ENCODE measurements at regions of chr11 and their contacts with region 1.

Region 1: DNA sequence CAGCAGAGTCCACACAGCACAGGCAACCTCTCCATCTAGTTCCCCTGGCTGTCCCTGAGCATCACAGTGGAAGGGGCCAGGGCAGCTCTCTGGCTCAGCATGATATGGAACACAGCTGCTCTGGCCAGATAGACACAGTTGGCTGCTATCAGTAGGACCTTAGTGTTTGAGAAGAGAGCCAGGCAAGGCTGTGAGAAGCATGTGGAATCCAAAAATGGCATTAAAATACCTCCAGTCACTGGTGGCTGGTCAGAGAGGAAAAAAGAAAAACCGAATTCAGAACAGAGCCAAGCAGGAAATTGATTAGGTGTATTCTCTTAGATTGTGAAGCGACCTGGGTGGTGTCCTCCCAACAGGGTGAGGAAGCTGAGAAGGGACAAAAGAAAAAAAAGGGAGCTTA is 27.9 kb downstream of the SERPINH1 start:
- DNase-seq: no peak
- H3K4me3 ChIP-seq: no peak overlapping the region
- H3K27ac ChIP-seq: no peak overlapping the region
- H3K4me1 ChIP-seq: no peaks in the 10 kb centered on the region
- H3K27me3 ChIP-seq: no peaks in the 10 kb centered on the region
- CTCF ChIP-seq: no peak
- EP300 ChIP-seq: no peak
- POLR2A ChIP-seq: no peak
- RAD21 ChIP-seq: no peak

Region 2: GRCh38 chr11:75577207-75577606 is 12.7 kb before region 1 on chr11:
- CTCF ChIA-PET with region 1: interaction called, 29 read pairs
- POLR2A ChIA-PET with region 1: interaction called, 1,120 read pairs
- DNase-seq: peak in 1 of 2 experiments; percentile 88
- H3K4me3 ChIP-seq: no peak overlapping the region
- H3K27ac ChIP-seq: no peak overlapping the region
- H3K4me1 ChIP-seq: peaks cover 0 to 5% (median 2%) of the 10 kb centered on the region in 4 experiments; a peak in 4 of 7 replicates
- H3K27me3 ChIP-seq: no peaks in the 10 kb centered on the region
- CTCF ChIP-seq: peak; percentile 61 to 80 (median 61)
- EP300 ChIP-seq: no peak
- POLR2A ChIP-seq: no peak
- RAD21 ChIP-seq: peak in 1 of 2 experiments; percentile 40; a peak in 1 of 4 replicates

Region 3: DNA sequence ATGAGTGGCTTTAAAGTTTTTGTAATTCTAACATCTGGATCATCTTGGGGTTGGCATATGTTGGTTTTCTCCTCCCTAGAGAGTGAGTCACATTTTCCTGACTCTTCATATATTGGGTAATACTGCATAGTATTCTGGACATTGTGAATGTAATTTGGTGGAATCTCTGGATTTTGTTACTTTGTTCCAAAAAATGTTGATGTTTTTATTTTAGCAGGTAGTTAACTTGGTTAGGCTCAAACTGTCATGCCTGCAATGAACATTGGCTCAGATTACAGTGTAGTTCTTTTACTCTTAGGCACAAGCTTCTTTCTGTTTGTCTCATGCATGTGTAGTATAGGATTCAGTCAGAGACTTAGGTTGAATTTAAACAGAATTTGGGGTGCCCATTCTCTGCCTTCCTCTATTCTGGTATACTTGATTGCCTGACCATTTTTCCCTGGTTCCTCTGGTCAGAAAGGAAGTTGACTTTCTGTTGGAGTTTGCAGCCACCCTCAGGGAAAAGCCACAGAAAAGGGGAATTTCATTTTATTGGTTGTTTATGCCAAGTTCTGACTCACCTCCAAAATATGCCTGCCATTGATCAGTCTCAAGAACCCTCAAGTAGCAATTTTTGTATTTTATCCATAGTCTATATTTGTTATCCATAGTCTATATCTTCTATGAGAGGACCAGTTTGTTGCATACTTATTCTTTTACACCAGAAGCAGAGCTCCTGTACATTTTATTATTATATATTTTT is 376.8 kb after region 1 on chr11:
- CTCF ChIA-PET with region 1: no interaction called
- POLR2A ChIA-PET with region 1: no interaction called
- DNase-seq: no peak
- H3K4me3 ChIP-seq: no peak overlapping the region
- H3K27ac ChIP-seq: no peak overlapping the region
- H3K4me1 ChIP-seq: no peaks in the 10 kb centered on the region; a peak in 1 of 7 replicates
- H3K27me3 ChIP-seq: no peaks in the 10 kb centered on the region
- CTCF ChIP-seq: no peak
- EP300 ChIP-seq: no peak
- POLR2A ChIP-seq: no peak
- RAD21 ChIP-seq: no peak